ENCODE measurements at regions of chr1 and their contacts with region 1.

Region 1: GRCh38 chr1:234309598-234310459 is 63.4 kb upstream of the COA6 start:
- DNase-seq: peak; percentile 41 to 80 (median 55)
- H3K4me3 ChIP-seq: no peak overlapping the region
- H3K4me3 Mint-ChIP-seq: peak overlapping the region in 4 of 7 donors; percentile 20 to 67 (median 33)
- H3K27ac ChIP-seq: no peak overlapping the region
- H3K27ac Mint-ChIP-seq: peak overlapping the region in 5 of 8 donors; percentile 17 to 71 (median 39)
- H3K4me1 ChIP-seq: peaks cover 27% of the 10 kb centered on the region
- H3K4me1 Mint-ChIP-seq: peaks cover 30 to 44% (median 40%) of the 10 kb centered on the region in 3 donors
- H3K27me3 ChIP-seq: no peaks in the 10 kb centered on the region
- H3K27me3 Mint-ChIP-seq: peaks cover 3 to 8% of the 10 kb centered on the region in 2 donors

Region 2: DNA sequence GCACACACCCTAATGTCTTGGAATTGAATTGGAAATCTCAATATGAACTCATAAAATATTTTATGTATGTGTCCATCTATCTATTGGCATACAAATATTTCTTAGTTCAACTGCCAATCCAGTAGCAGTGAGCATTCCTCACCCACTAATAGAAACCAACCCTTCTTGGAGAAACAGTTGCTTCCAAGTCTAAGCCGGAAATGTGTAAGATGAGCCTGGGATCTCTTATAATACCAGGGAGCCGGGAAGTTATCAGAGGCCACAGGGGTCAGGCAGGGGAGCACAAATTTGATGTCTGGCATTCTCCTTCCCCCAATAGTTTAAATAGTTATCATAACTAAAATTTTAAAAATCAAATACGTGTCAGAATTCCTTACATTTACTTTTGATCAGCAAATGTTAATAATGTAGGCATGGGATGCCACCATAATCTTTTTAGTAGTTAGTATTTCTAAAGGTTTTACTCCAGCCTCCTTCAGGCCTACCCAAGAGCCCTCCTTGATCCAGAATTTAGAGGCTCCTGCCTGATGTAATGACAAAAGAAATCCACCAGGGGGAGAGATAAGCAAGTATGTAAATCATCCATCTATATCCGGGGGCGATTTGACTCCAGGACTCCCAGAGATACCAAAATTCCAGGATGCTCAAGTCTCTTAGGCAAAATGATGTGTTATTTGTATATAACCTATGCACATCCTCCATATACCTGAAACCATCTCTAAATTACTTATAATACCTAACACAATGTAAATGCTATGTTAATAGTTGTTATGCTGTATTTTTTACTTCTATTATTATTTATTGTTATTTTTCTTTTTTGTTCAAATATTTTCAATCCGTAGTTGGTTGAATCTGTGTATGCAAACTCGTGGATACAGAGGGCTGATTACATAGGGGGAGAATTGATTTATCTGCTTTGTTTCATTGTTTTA is 155.2 kb before region 1 on chr1:
- CTCF ChIA-PET with region 1: no interaction called
- POLR2A ChIA-PET with region 1: no interaction called
- DNase-seq: peak in 2 of 5 donors; percentile 11 to 12
- H3K4me3 ChIP-seq: no peak overlapping the region
- H3K4me3 Mint-ChIP-seq: no peak overlapping the region
- H3K27ac ChIP-seq: no peak overlapping the region
- H3K27ac Mint-ChIP-seq: no peak overlapping the region
- H3K4me1 ChIP-seq: no peaks in the 10 kb centered on the region
- H3K4me1 Mint-ChIP-seq: no peaks in the 10 kb centered on the region
- H3K27me3 ChIP-seq: no peaks in the 10 kb centered on the region
- H3K27me3 Mint-ChIP-seq: peaks cover 0 to 21% of the 10 kb centered on the region in 2 donors

Region 3: GRCh38 chr1:234212764-234213657 is 96.8 kb before region 1 on chr1:
- CTCF ChIA-PET with region 1: interaction called, 48 read pairs
- POLR2A ChIA-PET with region 1: interaction called, 4 read pairs
- DNase-seq: peak in 2 of 5 donors; percentile 11 to 17
- H3K4me3 ChIP-seq: no peak overlapping the region
- H3K4me3 Mint-ChIP-seq: peak overlapping the region in 5 of 7 donors; percentile 20 to 60 (median 43)
- H3K27ac ChIP-seq: no peak overlapping the region
- H3K27ac Mint-ChIP-seq: peak overlapping the region in 2 of 8 donors; percentile 4 to 29
- H3K4me1 ChIP-seq: no peaks in the 10 kb centered on the region
- H3K4me1 Mint-ChIP-seq: peaks cover 11 to 15% (median 14%) of the 10 kb centered on the region in 3 donors
- H3K27me3 ChIP-seq: no peaks in the 10 kb centered on the region
- H3K27me3 Mint-ChIP-seq: peaks cover 28 to 55% of the 10 kb centered on the region in 2 donors

Region 4: GRCh38 chr1:234295068-234295467 is 14.8 kb before region 1 on chr1:
- CTCF ChIA-PET with region 1: interaction called, 18 read pairs
- POLR2A ChIA-PET with region 1: no interaction called
- DNase-seq: no peak
- H3K4me3 ChIP-seq: no peak overlapping the region
- H3K4me3 Mint-ChIP-seq: no peak overlapping the region
- H3K27ac ChIP-seq: no peak overlapping the region
- H3K27ac Mint-ChIP-seq: no peak overlapping the region
- H3K4me1 ChIP-seq: no peaks in the 10 kb centered on the region
- H3K4me1 Mint-ChIP-seq: no peaks in the 10 kb centered on the region
- H3K27me3 ChIP-seq: no peaks in the 10 kb centered on the region
- H3K27me3 Mint-ChIP-seq: peaks cover 8 to 51% of the 10 kb centered on the region in 2 donors

Region 5: DNA sequence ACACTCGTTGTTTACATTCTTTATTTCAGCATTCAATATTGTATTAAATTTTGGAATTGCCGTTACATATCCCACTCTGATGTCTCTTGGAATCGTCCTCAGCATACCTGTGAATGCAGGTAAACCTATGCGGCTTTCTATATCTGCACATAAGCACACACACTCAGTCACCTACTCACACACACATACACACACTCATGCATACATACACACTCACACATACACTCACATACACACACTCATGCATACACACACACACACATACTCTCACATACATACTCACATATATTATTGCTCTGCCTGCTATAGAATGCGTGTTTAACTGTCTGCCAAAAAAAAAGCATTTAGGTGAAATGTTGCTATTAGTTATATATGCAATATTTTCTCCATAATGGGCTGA is 10.2 kb after region 1 on chr1:
- CTCF ChIA-PET with region 1: interaction called, 116 read pairs
- POLR2A ChIA-PET with region 1: no interaction called
- DNase-seq: no peak
- H3K4me3 ChIP-seq: no peak overlapping the region
- H3K4me3 Mint-ChIP-seq: no peak overlapping the region
- H3K27ac ChIP-seq: no peak overlapping the region
- H3K27ac Mint-ChIP-seq: peak overlapping the region in 1 of 8 donors; percentile 0
- H3K4me1 ChIP-seq: peaks cover 15% of the 10 kb centered on the region
- H3K4me1 Mint-ChIP-seq: peaks cover 34 to 56% (median 53%) of the 10 kb centered on the region in 3 donors
- H3K27me3 ChIP-seq: no peaks in the 10 kb centered on the region
- H3K27me3 Mint-ChIP-seq: peaks cover 8 to 54% of the 10 kb centered on the region in 2 donors

Region 6: DNA sequence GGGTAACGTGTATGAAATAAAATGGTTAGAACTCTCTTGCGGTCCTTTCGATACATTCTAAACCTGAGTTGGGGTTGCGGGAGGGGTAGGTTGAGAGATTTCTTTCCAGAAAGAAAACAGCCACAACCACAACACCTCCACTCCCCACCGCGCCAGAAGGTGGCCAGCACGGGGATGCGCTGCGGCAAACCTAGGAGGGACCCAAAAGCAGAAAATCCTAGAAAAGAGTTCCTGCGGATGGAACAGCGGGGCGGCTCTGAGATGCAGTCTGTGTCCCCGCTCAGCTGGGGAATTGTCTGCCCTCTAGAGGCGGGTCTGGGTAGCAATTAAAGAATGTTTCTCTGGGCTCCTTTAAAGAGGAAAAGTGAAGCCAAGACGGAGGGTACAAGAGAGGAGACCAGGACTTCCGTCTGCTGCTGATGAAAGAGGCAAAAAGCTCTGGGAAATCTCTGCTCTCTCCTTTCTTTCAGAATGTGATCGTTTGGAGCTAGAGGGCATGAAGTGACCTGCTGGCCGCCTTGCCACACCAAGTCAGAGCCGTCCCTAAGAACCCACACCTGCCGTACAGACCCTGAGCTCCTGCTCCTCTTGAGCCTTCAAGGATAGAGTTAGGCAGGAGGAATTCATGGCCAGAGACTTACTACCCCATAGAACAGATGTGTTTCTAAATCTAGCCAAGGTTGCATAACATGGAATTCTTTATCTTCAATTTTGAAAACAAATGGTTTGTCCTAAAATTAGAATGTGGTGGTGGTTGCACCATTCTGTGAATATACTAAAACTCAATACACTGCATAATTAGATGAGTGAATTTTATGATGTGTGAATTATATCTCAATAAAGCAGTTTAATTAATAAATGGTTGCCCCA is 16.9 kb after region 1 on chr1:
- CTCF ChIA-PET with region 1: interaction called, 116 read pairs
- POLR2A ChIA-PET with region 1: no interaction called
- DNase-seq: peak; percentile 54 to 76 (median 57)
- H3K4me3 ChIP-seq: peak overlapping the region; percentile 70
- H3K4me3 Mint-ChIP-seq: peak overlapping the region; percentile 82 to 92 (median 87)
- H3K27ac ChIP-seq: peak overlapping the region; percentile 17
- H3K27ac Mint-ChIP-seq: peak overlapping the region in 7 of 8 donors; percentile 41 to 97 (median 75)
- H3K4me1 ChIP-seq: peaks cover 5% of the 10 kb centered on the region
- H3K4me1 Mint-ChIP-seq: peaks cover 11 to 32% (median 30%) of the 10 kb centered on the region in 3 donors
- H3K27me3 ChIP-seq: no peaks in the 10 kb centered on the region
- H3K27me3 Mint-ChIP-seq: peaks cover 7 to 42% of the 10 kb centered on the region in 2 donors